ENCODE measurements at regions of chr17 and their contacts with region 1.

Region 1: GRCh38 chr17:66625311-66625775 is 209.6 kb upstream of the CACNG5 start:
- DNase-seq: no peak
- H3K4me3 ChIP-seq: no peak overlapping the region
- H3K27ac ChIP-seq: no peak overlapping the region
- H3K4me1 ChIP-seq: no peaks in the 10 kb centered on the region
- H3K27me3 ChIP-seq: no peaks in the 10 kb centered on the region
- CTCF ChIP-seq: peak; percentile 74

Region 2: GRCh38 chr17:66290101-66290722 is 335.1 kb before region 1 on chr17:
- CTCF ChIA-PET with region 1: no interaction called
- POLR2A ChIA-PET with region 1: no interaction called
- intact Hi-C with region 1: no loop called
- DNase-seq: no peak
- H3K4me3 ChIP-seq: no peak overlapping the region
- H3K27ac ChIP-seq: no peak overlapping the region
- H3K4me1 ChIP-seq: no peaks in the 10 kb centered on the region
- H3K27me3 ChIP-seq: no peaks in the 10 kb centered on the region
- CTCF ChIP-seq: no peak

Region 3: GRCh38 chr17:66301797-66302741 is 323.3 kb before region 1 on chr17 and contains the start of gene PRKCA:
- CTCF ChIA-PET with region 1: no interaction called
- POLR2A ChIA-PET with region 1: no interaction called
- intact Hi-C with region 1: loop called (anchors 1 kb)
- DNase-seq: peak in 1 of 2 experiments; percentile 83
- H3K4me3 ChIP-seq: peak within 1 kb of the TSS; percentile 96
- H3K27ac ChIP-seq: peak within 1 kb of the TSS; percentile 56
- H3K4me1 ChIP-seq: peaks cover 30% of the 10 kb centered on the region
- H3K27me3 ChIP-seq: no peaks in the 10 kb centered on the region
- CTCF ChIP-seq: no peak
- total RNA-seq, gene PRKCA: 23.1 and 23.8 TPM in 2 replicates